IMR-90 (cell line): ENCODE measurements at regions of chr20 and their contacts with region 1.

Region 1: DNA sequence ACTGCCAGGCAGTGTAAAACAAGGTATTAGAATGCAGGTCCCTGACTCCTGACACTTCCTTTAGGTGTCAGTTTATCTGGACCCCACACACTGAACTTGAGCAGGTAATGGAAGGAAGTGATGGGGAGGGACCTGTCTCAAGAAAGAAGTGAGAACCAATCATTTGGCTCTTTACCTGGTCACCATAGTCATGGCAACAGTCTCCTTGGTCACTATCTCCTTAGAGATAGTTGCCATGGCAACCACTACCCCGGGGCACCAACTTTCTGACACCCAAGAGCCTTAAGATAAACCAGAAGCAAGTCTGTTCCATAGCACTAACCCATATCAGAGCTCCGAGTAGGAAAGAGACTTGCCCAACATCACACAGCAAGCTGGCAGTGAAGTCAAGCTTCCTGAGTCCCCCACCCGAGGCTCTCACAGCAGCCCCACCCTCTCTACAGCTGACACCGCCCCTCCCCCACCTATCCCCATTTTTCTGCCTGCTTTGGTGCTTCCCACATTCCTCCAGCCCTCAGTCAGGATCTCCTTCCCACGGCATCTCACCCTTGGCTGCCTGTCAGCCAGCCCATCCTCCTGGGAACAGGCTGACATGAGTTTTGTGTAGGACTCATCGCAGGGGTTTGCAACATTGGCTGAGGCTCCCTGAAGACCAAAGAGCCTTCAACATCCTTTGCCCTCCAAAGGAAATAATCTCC is 16.3 kb upstream of the HM13 start:
- DNase-seq: peak; percentile 49
- ATAC-seq: no peak
- H3K4me3 ChIP-seq: no peak overlapping the region
- H3K27ac ChIP-seq: no peak overlapping the region
- H3K4me1 ChIP-seq: 0 out of 2 replicates have a peak, but pooled peaks cover 2% of the 10 kb centered on the region
- H3K27me3 ChIP-seq: peaks cover 9% of the 10 kb centered on the region
- CTCF ChIP-seq: no peak
- POLR2A ChIP-seq: no peak
- RAD21 ChIP-seq: no peak

Region 2: GRCh38 chr20:31308535-31309162 is 189.3 kb before region 1 on chr20 and contains the start of gene DEFB116:
- CTCF ChIA-PET with region 1: no interaction called
- POLR2A ChIA-PET with region 1: no interaction called
- dilution Hi-C with region 1: no loop called
- in situ Hi-C with region 1: no loop called
- intact Hi-C with region 1: loop called (anchors 1 kb)
- DNase-seq: no peak
- ATAC-seq: no peak
- H3K4me3 ChIP-seq: no peak within 1 kb of the TSS
- H3K27ac ChIP-seq: no peak within 1 kb of the TSS
- H3K4me1 ChIP-seq: no peaks in the 10 kb centered on the region
- H3K27me3 ChIP-seq: no peaks in the 10 kb centered on the region
- CTCF ChIP-seq: no peak
- POLR2A ChIP-seq: no peak
- RAD21 ChIP-seq: no peak
- total RNA-seq, gene DEFB116: not detected in 2 replicates

Region 3: GRCh38 chr20:31414380-31414779 is 83.6 kb before region 1 on chr20:
- CTCF ChIA-PET with region 1: no interaction called
- POLR2A ChIA-PET with region 1: no interaction called
- dilution Hi-C with region 1: no loop called
- in situ Hi-C with region 1: no loop called
- intact Hi-C with region 1: loop called (anchors 1 kb)
- DNase-seq: no peak
- ATAC-seq: no peak
- H3K4me3 ChIP-seq: no peak overlapping the region
- H3K27ac ChIP-seq: no peak overlapping the region
- H3K4me1 ChIP-seq: no peaks in the 10 kb centered on the region
- H3K27me3 ChIP-seq: no peaks in the 10 kb centered on the region
- CTCF ChIP-seq: no peak
- POLR2A ChIP-seq: no peak
- RAD21 ChIP-seq: no peak

Region 4: DNA sequence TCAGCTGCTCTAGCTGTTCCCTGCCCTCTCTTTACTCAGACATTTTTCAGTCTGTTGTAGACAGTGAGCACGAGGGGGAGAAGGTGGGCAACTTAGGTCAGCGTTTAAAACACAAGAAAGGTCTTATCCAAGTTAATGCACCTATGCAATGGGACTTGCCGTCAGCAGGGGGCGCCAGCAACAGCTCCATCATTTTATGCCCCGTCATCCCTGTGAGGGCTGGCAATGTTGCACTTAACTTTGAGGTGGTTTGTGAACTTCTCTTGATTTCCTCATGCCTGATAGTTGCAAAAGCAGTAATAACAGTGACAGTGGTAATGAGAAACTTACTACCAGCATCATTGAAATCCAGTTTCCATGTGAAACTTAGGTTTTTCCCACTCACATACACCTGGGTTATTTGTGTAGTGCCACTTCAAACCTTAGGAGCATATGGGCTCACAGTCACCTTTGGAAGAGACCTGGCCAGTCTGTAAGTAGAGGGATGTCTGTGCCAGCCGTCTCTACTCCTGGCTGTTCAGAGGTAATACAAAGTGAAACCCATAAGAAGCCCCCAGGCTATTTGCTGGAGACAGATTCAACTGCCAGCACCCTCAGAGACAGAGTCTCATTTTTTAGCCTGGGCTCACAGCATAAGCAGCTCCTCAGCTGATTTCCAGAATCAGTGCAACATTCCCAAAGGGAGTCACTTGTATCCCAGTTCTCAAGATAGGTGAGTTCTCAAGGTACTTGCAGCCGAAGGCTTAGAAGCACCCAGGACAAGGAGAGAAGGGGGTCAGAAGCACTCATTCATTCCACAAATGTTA is 62.3 kb after region 1 on chr20:
- CTCF ChIA-PET with region 1: no interaction called
- POLR2A ChIA-PET with region 1: no interaction called
- dilution Hi-C with region 1: no loop called
- in situ Hi-C with region 1: no loop called
- intact Hi-C with region 1: no loop called
- DNase-seq: peak; percentile 86
- ATAC-seq: peak; percentile 48
- H3K4me3 ChIP-seq: no peak overlapping the region
- H3K27ac ChIP-seq: peak overlapping the region; percentile 76
- H3K4me1 ChIP-seq: peaks cover 18% of the 10 kb centered on the region
- H3K27me3 ChIP-seq: no peaks in the 10 kb centered on the region
- CTCF ChIP-seq: peak; percentile 91
- POLR2A ChIP-seq: no peak; the same call in 1 of the 2 replicates
- RAD21 ChIP-seq: peak; percentile 60

Region 5: DNA sequence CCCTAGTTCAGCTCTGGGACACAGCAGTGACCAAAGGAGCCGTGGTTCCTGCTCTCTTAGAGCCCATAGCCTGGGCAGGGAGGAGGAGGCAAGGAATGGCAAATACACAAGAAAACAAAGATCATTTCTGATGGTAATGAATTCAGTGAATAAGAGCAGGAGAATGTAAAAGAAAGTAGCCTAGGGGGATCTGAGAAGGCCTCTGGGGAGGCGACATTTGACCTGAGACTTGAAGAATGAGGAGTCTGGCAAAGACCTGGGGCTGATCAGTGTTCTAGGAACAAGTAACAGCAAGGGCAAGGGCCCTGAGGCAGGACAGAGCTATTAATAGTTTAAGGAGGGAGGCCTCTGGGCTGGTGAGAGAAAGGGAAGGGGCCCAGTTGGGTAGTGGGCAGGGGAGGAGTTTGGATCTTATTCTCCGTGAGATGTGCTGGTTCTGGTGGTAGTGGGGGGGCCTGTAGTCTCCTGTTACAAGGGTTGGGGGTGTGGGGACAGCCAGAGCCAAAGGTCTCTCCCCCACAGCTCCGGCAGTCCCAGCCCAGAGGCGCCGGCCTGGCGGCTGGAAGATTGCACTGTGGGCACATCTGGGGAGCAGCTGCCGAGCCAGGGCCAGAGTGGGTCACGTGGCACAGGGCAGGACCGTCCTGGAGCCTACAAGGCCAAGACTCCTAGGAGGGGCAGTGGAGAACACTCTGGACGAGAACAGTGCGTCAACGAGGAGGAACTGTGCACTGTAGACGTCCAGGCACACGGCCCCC is 97.8 kb after region 1 on chr20:
- CTCF ChIA-PET with region 1: no interaction called
- POLR2A ChIA-PET with region 1: no interaction called
- dilution Hi-C with region 1: no loop called
- in situ Hi-C with region 1: no loop called
- intact Hi-C with region 1: no loop called
- DNase-seq: peak; percentile 86
- ATAC-seq: peak; percentile 86
- H3K4me3 ChIP-seq: no peak overlapping the region
- H3K27ac ChIP-seq: peak overlapping the region; percentile 96
- H3K4me1 ChIP-seq: peaks cover 14% of the 10 kb centered on the region
- H3K27me3 ChIP-seq: no peaks in the 10 kb centered on the region
- CTCF ChIP-seq: no peak
- POLR2A ChIP-seq: peak; percentile 61; the same call in 1 of the 2 replicates
- RAD21 ChIP-seq: peak; percentile 4; the same call in 1 of the 2 replicates